ENCODE measurements at regions of chr5 and their contacts with region 1.

Region 1: DNA sequence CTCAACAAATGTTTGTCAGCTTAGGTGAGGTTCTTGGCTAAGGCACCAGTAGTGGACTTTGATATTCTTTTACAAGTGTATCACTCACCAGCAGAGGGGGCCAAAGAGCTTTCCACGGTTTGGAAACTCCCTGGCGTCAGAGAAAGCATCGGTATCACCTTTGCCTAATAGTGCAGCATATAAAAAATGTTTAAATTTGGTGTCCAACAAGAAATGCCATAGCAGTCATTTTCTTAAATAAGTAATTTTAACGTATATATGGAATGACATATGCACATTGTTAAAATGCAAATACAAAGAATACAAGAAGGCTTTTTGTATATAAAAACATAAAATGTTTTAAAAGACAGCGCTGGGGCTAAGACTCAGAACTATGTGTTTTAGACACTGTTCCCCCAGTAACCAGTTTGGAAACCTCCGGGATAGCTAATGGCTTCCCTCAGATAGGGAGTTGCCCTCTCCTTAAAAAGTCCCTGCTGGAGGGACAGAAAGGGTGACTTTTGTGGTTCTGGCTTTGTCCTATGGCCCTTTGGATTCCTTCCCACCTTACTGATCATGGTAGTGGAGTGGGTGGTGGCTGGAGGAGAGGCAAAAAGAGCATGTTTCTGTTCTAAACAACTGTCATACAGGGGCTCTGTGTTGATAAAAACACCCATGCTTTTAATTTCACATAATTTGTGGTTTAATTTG is 124.6 kb downstream of the GPBP1 start:
- DNase-seq: peak; percentile 65
- H3K4me3 ChIP-seq: peak overlapping the region; percentile 49
- H3K27ac ChIP-seq: peak overlapping the region; percentile 50
- H3K4me1 ChIP-seq: peaks cover 11% of the 10 kb centered on the region
- H3K27me3 ChIP-seq: no peaks in the 10 kb centered on the region
- CTCF ChIP-seq: peak; percentile 89

Region 2: GRCh38 chr5:57137401-57137800 is 161.0 kb before region 1 on chr5:
- intact Hi-C with region 1: no loop called
- DNase-seq: no peak
- H3K4me3 ChIP-seq: no peak overlapping the region
- H3K27ac ChIP-seq: no peak overlapping the region
- H3K4me1 ChIP-seq: no peaks in the 10 kb centered on the region
- H3K27me3 ChIP-seq: no peaks in the 10 kb centered on the region
- CTCF ChIP-seq: no peak

Region 3: GRCh38 chr5:57499262-57500050 is 201.0 kb after region 1 on chr5:
- intact Hi-C with region 1: loop called (anchors 10 kb)
- DNase-seq: no peak
- H3K4me3 ChIP-seq: peak overlapping the region; percentile 48
- H3K27ac ChIP-seq: peak overlapping the region; percentile 30
- H3K4me1 ChIP-seq: peaks cover 44% of the 10 kb centered on the region
- H3K27me3 ChIP-seq: no peaks in the 10 kb centered on the region
- CTCF ChIP-seq: peak; percentile 82

Region 4: GRCh38 chr5:58122157-58122556 is 823.7 kb after region 1 on chr5:
- intact Hi-C with region 1: no loop called
- DNase-seq: no peak
- H3K4me3 ChIP-seq: no peak overlapping the region
- H3K27ac ChIP-seq: no peak overlapping the region
- H3K4me1 ChIP-seq: peaks cover 23% of the 10 kb centered on the region
- H3K27me3 ChIP-seq: no peaks in the 10 kb centered on the region
- CTCF ChIP-seq: no peak